ENCODE measurements at regions of chr11 and their contacts with region 1.

Region 1: DNA sequence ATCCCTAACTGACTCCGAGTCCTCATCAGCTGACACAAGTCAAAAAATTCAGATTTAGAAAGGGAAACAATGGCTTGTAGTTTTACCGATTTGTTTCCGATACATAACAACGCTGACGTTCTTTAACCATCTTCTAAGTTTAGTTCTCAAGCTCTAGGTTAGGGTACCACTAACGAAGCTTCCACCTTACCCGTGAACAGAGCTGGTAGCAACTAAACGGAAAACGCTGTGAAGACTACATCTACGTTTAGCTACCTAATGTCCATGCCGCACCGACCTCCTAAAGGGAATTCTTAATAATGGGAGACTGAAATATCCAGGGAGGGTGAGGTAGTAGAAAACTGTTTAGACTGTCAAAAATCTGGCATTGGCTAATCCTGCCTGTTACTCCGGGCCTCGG is 1.0 kb downstream of the NUP98 start:
- DNase-seq: no peak
- ATAC-seq: no peak
- H3K4me3 ChIP-seq: peak overlapping the region; percentile 73 to 89
- H3K27ac ChIP-seq: peak overlapping the region; percentile 95
- H3K4me1 ChIP-seq: peaks cover 10% of the 10 kb centered on the region
- H3K27me3 ChIP-seq: no peaks in the 10 kb centered on the region
- CTCF ChIP-seq: no peak

Region 2: DNA sequence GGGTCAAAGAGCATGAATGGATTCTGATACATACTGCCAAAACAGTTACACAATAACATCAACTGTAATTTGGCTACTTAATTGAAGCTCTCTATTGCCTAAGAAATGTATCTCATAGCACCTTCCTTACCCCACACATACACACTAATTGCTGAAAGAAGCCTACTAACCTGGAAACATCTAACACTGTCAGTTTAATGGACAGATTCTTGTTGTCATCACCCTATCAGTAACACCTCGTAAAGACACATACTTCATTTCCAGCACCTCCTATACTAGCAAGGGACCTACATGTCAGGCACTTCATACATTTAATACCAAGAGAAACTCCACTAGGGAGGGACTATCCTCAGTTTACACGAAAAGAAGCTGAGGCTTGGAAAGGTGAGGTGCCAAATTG is 814.1 kb before region 1 on chr11:
- CTCF ChIA-PET with region 1: interaction called, 11 read pairs
- POLR2A ChIA-PET with region 1: no interaction called
- in situ Hi-C with region 1: no loop called
- intact Hi-C with region 1: no loop called
- DNase-seq: no peak
- ATAC-seq: no peak
- H3K4me3 ChIP-seq: no peak overlapping the region
- H3K27ac ChIP-seq: 0 out of 2 replicates have a peak overlapping the region, but pooled peaks have one; percentile 1
- H3K4me1 ChIP-seq: peaks cover 37% of the 10 kb centered on the region
- H3K27me3 ChIP-seq: no peaks in the 10 kb centered on the region
- CTCF ChIP-seq: no peak

Region 3: DNA sequence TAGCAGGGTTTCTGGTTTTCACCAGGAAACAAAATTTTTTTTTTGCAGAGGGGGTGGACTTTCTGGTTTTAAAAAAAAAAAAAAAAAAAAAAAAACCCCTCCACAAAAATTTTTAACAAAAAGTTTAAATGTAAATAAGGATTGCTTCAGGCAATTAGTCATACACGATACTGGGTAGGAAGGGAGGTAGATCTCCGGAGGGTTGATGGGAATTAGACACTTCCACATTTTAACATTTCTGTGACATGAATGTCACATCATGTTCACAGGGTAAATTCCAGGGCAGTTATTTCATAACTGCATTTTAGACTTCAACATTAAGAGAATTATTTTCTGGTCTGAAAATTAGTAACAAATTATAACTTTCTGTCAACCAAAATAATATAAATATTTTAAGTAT is 14.9 kb before region 1 on chr11:
- CTCF ChIA-PET with region 1: interaction called, 3 read pairs
- POLR2A ChIA-PET with region 1: interaction called, 27 read pairs
- in situ Hi-C with region 1: no loop called
- intact Hi-C with region 1: no loop called
- DNase-seq: no peak
- ATAC-seq: no peak
- H3K4me3 ChIP-seq: no peak overlapping the region
- H3K27ac ChIP-seq: no peak overlapping the region
- H3K4me1 ChIP-seq: peaks cover 4% of the 10 kb centered on the region; the same call in 1 of the 2 replicates
- H3K27me3 ChIP-seq: no peaks in the 10 kb centered on the region
- CTCF ChIP-seq: no peak

Region 4: GRCh38 chr11:3831378-3832239 is 35.3 kb after region 1 on chr11:
- CTCF ChIA-PET with region 1: no interaction called
- POLR2A ChIA-PET with region 1: no interaction called
- in situ Hi-C with region 1: no loop called
- intact Hi-C with region 1: no loop called
- DNase-seq: no peak
- ATAC-seq: no peak
- H3K4me3 ChIP-seq: no peak overlapping the region
- H3K27ac ChIP-seq: no peak overlapping the region
- H3K4me1 ChIP-seq: peaks cover 7% of the 10 kb centered on the region
- H3K27me3 ChIP-seq: no peaks in the 10 kb centered on the region
- CTCF ChIP-seq: no peak

Region 5: GRCh38 chr11:3841426-3842350 is 45.3 kb after region 1 on chr11:
- CTCF ChIA-PET with region 1: interaction called, 11 read pairs
- POLR2A ChIA-PET with region 1: interaction called, 4 read pairs
- in situ Hi-C with region 1: no loop called
- intact Hi-C with region 1: no loop called
- DNase-seq: peak; percentile 82
- ATAC-seq: peak; percentile 84
- H3K4me3 ChIP-seq: peak overlapping the region; percentile 62 to 63
- H3K27ac ChIP-seq: peak overlapping the region; percentile 84
- H3K4me1 ChIP-seq: peaks cover 36% of the 10 kb centered on the region
- H3K27me3 ChIP-seq: no peaks in the 10 kb centered on the region
- CTCF ChIP-seq: peak; percentile 100